Activated T-helper 2 cell treated with anti-CD3 and anti-CD28 coated beads, Interferon-gamma antibody, Interleukin-2, Interleukin-4, amounts not matched to agents 10 μg/mL and 5 μg/mL and 100 μg/mL, durations not matched to agents 14 hours and 24 hours and 36 hours (primary cell): ENCODE measurements at regions of chr7 and their contacts with region 1.

Region 1: DNA sequence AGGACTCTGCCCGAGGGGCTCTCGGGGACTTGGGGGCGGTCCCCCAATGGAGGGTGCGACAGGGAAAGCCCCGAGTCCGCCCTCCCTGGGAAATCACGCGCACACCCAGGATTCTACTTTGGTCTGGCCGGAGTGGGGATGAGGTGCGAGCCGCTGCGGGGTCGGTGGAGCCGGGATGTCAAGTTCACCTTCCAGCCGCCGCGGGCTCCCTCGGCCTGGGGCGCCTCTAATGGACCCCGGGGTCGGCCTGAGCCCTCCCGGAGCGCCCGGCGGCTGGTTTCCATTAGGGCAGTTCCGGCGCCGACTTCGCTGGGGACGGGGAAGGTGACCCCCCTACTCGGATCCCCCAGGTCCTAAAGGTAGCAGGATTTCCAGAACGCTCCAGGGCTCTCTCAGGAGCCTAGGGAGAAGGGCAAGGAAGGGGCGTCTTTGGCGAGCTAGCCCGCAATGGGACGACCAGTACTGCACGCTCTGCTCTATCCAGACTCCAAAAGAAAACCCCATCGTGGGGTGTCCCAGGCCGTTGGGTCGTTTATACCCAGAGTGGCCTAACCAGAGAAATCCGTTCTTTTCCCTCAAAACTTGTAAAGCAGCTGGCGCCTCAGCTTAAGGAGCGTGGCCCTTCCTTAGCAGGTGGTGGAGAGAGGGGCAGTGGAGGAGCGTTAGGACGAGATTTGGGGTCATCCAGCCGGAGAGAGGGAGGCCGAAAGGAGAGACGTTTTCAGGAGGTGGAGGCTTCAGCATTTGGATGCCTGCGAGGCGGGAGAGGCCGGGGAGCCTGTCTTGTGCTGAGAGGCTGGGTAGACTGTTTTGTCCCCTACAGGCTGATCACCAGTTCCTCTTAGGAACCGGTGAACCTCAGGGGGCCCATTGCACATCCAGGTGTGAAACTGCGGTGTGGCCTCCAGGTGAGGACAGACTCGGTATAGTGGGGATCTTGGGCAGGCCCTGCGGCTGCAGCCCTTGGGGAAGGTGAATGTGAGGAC is 860 bp upstream of the WDR86 start:
- DNase-seq: no peak
- H3K4me3 Mint-ChIP-seq: no peak overlapping the region
- H3K27ac Mint-ChIP-seq: no peak overlapping the region
- H3K4me1 Mint-ChIP-seq: peaks cover 18% of the 10 kb centered on the region
- H3K27me3 Mint-ChIP-seq: peaks cover 52% of the 10 kb centered on the region

Region 2: DNA sequence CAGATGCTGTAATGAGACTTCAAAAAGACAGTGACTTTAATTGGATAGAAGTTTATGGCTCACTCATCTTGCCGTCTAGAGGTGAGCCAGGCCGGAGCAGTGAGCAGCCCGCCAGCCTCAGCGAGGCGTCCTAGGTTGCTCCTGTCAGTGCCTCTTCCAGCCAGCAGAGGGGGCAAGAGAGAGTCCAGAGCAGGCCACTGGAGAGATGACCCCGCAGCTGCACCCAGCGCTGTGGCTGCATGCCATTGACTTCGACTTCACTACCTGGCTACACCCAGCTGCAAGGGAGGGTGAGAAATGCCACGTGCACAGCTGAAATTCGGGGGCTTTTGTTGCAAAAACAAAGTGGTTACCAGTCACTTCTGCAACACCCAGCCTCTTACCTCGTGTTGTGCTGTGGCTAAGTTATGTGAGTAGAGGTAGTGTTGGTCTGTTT is 42.5 kb before region 1 on chr7:
- intact Hi-C with region 1: loop called (anchors 5 kb)
- DNase-seq: peak; percentile 64
- H3K4me3 Mint-ChIP-seq: no peak overlapping the region
- H3K27ac Mint-ChIP-seq: no peak overlapping the region
- H3K4me1 Mint-ChIP-seq: peaks cover 4% of the 10 kb centered on the region
- H3K27me3 Mint-ChIP-seq: no peaks in the 10 kb centered on the region

Region 3: DNA sequence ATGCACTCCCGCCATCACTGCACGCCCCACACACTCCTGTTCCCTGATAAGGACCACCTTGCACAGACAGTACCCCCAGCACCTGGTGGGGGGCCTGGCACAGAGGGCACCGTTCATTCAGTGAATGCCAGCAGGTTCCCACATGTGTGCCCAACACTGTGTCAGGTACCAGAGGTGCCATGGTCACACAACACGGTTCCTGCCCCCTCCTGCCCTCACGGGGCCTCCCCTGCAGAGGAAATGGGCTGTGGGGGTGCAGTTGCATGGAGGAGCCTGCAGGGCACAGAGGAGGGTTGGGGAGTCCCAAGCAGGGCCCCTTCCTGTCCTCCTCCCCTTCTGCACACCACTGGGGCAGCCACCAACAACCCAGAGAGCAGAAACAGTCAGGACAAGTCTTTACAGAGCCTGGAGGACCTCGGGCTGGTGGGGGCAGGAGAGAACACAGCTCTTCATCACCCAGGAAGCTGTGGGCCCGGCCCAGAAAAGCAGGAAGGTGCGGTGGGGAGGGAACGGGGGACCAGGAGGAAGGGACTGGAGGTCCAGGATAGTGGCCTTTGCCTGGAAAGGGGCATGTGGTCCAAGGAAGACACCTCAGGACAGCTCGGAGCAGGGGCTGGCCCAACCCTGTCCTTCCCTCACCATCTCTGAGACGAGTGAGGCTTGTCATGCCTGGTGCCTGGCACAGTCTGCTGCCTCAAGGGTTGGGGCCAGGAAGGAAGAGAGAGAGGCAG is 22.3 kb after region 1 on chr7:
- intact Hi-C with region 1: loop called (anchors 2 kb)
- DNase-seq: peak; percentile 48
- H3K4me3 Mint-ChIP-seq: peak overlapping the region; percentile 14
- H3K27ac Mint-ChIP-seq: peak overlapping the region; percentile 68
- H3K4me1 Mint-ChIP-seq: peaks cover 34% of the 10 kb centered on the region
- H3K27me3 Mint-ChIP-seq: peaks cover 1% of the 10 kb centered on the region

Region 4: GRCh38 chr7:151448261-151449252 is 37.9 kb after region 1 on chr7:
- intact Hi-C with region 1: loop called (anchors 2 kb)
- DNase-seq: peak; percentile 69
- H3K4me3 Mint-ChIP-seq: peak overlapping the region; percentile 58
- H3K27ac Mint-ChIP-seq: no peak overlapping the region
- H3K4me1 Mint-ChIP-seq: peaks cover 2% of the 10 kb centered on the region
- H3K27me3 Mint-ChIP-seq: peaks cover 5% of the 10 kb centered on the region